ENCODE measurements at regions of chr10 and their contacts with region 1.

Region 1: GRCh38 chr10:116796910-116797513 is 52.3 kb upstream of the ENO4 start:
- DNase-seq: peak; percentile 31
- ATAC-seq: no peak
- H3K4me3 Mint-ChIP-seq: no peak overlapping the region
- H3K27ac Mint-ChIP-seq: no peak overlapping the region
- H3K4me1 Mint-ChIP-seq: no peaks in the 10 kb centered on the region
- H3K27me3 Mint-ChIP-seq: peaks cover 6% of the 10 kb centered on the region
- CTCF ChIP-seq: no peak

Region 2: DNA sequence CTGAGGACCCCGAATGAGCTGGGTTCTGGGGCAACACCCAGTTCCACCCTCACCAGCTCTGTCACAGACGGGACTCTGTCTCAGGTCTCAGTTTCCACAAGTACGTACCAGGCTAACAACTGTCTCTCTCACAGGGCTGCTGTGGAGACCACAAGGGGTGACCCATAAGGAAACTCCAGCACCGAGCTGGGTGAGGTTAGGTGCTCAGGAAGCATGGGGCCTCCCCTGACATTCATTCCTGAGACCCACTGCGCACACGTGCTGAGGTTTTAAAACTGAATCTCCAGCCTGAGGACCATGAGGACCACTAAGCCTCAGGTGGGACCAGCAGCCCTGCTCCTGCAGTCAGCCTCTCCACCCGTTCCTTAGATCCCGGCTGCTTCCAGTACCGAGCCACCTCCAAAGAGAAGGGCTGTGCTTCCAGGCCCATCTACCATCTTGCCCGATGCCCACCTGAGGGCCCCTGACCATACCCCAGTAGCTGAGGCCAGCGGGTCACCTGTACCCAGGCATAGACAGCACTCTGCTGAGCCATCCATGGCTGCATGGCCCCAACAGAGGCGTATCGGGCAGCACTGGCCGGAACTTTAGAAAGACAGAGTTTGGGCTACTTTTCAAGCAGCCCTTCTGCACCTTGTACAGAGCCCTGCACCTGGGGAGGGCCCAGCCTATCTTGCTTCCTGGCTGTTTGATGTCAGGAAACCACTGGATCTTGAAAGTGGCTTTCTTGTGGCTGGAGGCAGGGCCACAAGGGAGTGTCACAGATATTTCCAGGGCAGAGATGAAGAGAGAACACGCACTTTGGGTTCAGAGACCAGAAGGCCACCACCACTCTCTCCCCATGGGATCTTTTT is 73.4 kb before region 1 on chr10:
- CTCF ChIA-PET with region 1: no interaction called
- POLR2A ChIA-PET with region 1: no interaction called
- intact Hi-C with region 1: no loop called
- DNase-seq: no peak
- ATAC-seq: no peak
- H3K4me3 Mint-ChIP-seq: no peak overlapping the region
- H3K27ac Mint-ChIP-seq: no peak overlapping the region
- H3K4me1 Mint-ChIP-seq: no peaks in the 10 kb centered on the region
- H3K27me3 Mint-ChIP-seq: peaks cover 2% of the 10 kb centered on the region
- CTCF ChIP-seq: no peak

Region 3: DNA sequence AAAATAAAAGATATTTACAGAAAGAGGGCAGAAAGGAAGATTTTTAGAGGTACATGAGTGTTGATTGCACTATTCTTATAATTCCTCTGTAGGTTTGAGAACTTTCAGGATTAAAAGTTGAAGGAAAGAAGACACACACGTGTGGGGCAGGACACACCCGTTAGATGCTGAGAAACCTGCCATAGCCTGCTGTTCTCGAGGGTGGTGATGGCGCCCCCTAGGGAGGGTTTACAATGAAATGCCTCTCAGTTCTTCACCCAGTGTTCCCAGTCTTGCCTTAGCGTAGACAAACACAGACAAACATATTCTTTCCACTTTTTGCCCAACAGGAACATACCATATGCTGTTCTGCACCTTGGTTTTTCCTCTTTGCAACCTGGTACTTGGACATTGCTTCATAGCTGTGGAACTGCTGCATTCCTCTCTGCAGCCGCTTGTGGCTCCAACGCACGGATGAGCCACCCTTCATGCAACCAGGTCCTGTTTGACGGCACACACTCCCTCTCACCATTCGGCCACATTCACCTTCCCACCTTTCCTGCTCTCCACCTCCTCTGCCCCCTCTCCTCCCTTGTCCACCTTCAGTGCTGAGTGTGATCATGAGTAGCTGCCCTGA is 31.4 kb before region 1 on chr10:
- CTCF ChIA-PET with region 1: no interaction called
- POLR2A ChIA-PET with region 1: no interaction called
- intact Hi-C with region 1: no loop called
- DNase-seq: no peak
- ATAC-seq: no peak
- H3K4me3 Mint-ChIP-seq: no peak overlapping the region
- H3K27ac Mint-ChIP-seq: no peak overlapping the region
- H3K4me1 Mint-ChIP-seq: no peaks in the 10 kb centered on the region
- H3K27me3 Mint-ChIP-seq: peaks cover 28% of the 10 kb centered on the region
- CTCF ChIP-seq: no peak

Region 4: DNA sequence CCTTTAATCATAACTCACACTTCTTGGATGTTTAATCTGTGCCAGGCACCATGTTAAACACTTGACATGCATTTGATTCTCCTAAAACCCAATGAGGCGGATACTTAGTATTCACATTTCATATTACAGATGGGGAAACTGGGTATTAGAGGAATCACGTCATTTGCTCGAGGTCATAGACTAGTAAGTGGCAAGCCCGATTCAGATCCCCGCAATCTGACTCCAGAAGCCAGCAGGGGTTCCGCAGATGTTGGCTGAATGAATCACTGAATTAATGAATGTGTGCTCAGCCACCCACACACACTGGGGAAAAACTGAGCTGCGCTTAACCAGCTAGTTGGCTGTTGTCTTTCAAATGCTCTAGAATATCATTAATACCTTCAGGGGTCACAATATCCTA is 29.8 kb after region 1 on chr10:
- CTCF ChIA-PET with region 1: no interaction called
- POLR2A ChIA-PET with region 1: no interaction called
- intact Hi-C with region 1: no loop called
- DNase-seq: no peak
- ATAC-seq: no peak
- H3K4me3 Mint-ChIP-seq: no peak overlapping the region
- H3K27ac Mint-ChIP-seq: no peak overlapping the region
- H3K4me1 Mint-ChIP-seq: no peaks in the 10 kb centered on the region
- H3K27me3 Mint-ChIP-seq: no peaks in the 10 kb centered on the region
- CTCF ChIP-seq: no peak

Region 5: GRCh38 chr10:117074621-117075020 is 277.6 kb after region 1 on chr10:
- CTCF ChIA-PET with region 1: no interaction called
- POLR2A ChIA-PET with region 1: no interaction called
- intact Hi-C with region 1: loop called (anchors 10 kb)
- DNase-seq: no peak
- ATAC-seq: no peak
- H3K4me3 Mint-ChIP-seq: no peak overlapping the region
- H3K27ac Mint-ChIP-seq: no peak overlapping the region
- H3K4me1 Mint-ChIP-seq: no peaks in the 10 kb centered on the region
- H3K27me3 Mint-ChIP-seq: no peaks in the 10 kb centered on the region
- CTCF ChIP-seq: no peak